SK-N-SH (cell line): ENCODE measurements at regions of chr17 and their contacts with region 1.

Region 1: GRCh38 chr17:77088455-77089123 is 52.2 kb upstream of the SEC14L1 start:
- DNase-seq: peak; percentile 93
- H3K4me3 ChIP-seq: peak overlapping the region; percentile 69 to 85
- H3K27ac ChIP-seq: peak overlapping the region; percentile 85 to 87
- H3K4me1 ChIP-seq: peaks cover 5 to 25% of the 10 kb centered on the region in 2 experiments; a peak in 1 of 4 replicates
- H3K27me3 ChIP-seq: no peaks in the 10 kb centered on the region
- CTCF ChIP-seq: peak; percentile 79
- EP300 ChIP-seq: peak in 1 of 2 experiments; percentile 16; a peak in 1 of 4 replicates
- RAD21 ChIP-seq: peak; percentile 48

Region 2: GRCh38 chr17:77076124-77076872 is 12.3 kb before region 1 on chr17:
- CTCF ChIA-PET with region 1: interaction called, 16 read pairs
- POLR2A ChIA-PET with region 1: interaction called, 9 read pairs
- DNase-seq: no peak
- H3K4me3 ChIP-seq: no peak overlapping the region
- H3K27ac ChIP-seq: no peak overlapping the region
- H3K4me1 ChIP-seq: no peaks in the 10 kb centered on the region; a peak in 1 of 4 replicates
- H3K27me3 ChIP-seq: peaks cover 29% of the 10 kb centered on the region
- CTCF ChIP-seq: no peak
- EP300 ChIP-seq: no peak
- RAD21 ChIP-seq: no peak

Region 3: DNA sequence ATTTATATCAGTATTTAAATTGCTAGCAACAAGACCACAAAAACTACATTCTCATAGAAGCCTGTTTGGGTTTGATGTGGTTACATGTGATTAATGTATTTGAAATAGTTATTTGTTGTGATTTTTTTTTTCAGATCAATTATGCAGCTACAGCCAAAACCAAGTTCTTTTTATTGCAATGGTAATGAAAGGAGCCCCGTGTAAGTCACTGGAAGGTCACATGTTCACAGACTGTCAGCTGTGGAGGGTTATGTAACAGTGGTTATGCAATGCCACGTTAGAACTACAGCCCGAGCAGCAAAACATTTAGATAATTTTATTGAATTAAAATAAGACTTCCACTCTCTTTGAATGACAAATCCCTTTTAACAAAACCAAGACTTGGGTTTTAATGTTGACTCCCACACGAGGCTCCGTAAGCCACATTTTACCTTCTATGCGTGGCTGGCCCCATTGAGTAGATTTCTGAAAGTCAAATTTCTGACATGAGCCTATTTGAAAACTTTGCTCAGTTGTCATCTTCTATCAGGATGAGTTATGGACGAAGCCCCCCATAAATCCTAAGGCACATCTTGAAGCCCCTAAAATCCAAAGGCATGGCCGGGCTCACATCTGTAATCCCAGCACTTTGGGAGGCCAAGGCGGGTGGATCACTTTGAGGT is 10.4 kb after region 1 on chr17:
- CTCF ChIA-PET with region 1: interaction called, 19 read pairs
- POLR2A ChIA-PET with region 1: interaction called, 5 read pairs
- DNase-seq: no peak
- H3K4me3 ChIP-seq: no peak overlapping the region
- H3K27ac ChIP-seq: no peak overlapping the region
- H3K4me1 ChIP-seq: no peaks in the 10 kb centered on the region
- H3K27me3 ChIP-seq: no peaks in the 10 kb centered on the region
- CTCF ChIP-seq: no peak
- EP300 ChIP-seq: no peak
- RAD21 ChIP-seq: no peak

Region 4: GRCh38 chr17:77235370-77235941 is 146.9 kb after region 1 on chr17:
- CTCF ChIA-PET with region 1: interaction called, 14 read pairs
- POLR2A ChIA-PET with region 1: interaction called, 4 read pairs
- DNase-seq: peak; percentile 71
- H3K4me3 ChIP-seq: peak overlapping the region; percentile 7 to 42; a peak in 3 of 4 replicates
- H3K27ac ChIP-seq: peak overlapping the region; percentile 45 to 81
- H3K4me1 ChIP-seq: peaks cover 3 to 15% of the 10 kb centered on the region in 2 experiments; a peak in 2 of 4 replicates
- H3K27me3 ChIP-seq: no peaks in the 10 kb centered on the region
- CTCF ChIP-seq: no peak
- EP300 ChIP-seq: peak in 1 of 2 experiments; percentile 76; a peak in 2 of 4 replicates
- RAD21 ChIP-seq: no peak

Region 5: GRCh38 chr17:77254951-77255825 is 166.6 kb after region 1 on chr17:
- CTCF ChIA-PET with region 1: interaction called, 99 read pairs
- POLR2A ChIA-PET with region 1: interaction called, 3 read pairs
- DNase-seq: peak; percentile 68
- H3K4me3 ChIP-seq: no peak overlapping the region
- H3K27ac ChIP-seq: peak overlapping the region; percentile 53 to 76; a peak in 3 of 4 replicates
- H3K4me1 ChIP-seq: peaks cover 11 to 23% of the 10 kb centered on the region in 2 experiments; a peak in 3 of 4 replicates
- H3K27me3 ChIP-seq: no peaks in the 10 kb centered on the region
- CTCF ChIP-seq: no peak
- EP300 ChIP-seq: peak in 1 of 2 experiments; percentile 97; a peak in 2 of 4 replicates
- RAD21 ChIP-seq: no peak

Region 6: DNA sequence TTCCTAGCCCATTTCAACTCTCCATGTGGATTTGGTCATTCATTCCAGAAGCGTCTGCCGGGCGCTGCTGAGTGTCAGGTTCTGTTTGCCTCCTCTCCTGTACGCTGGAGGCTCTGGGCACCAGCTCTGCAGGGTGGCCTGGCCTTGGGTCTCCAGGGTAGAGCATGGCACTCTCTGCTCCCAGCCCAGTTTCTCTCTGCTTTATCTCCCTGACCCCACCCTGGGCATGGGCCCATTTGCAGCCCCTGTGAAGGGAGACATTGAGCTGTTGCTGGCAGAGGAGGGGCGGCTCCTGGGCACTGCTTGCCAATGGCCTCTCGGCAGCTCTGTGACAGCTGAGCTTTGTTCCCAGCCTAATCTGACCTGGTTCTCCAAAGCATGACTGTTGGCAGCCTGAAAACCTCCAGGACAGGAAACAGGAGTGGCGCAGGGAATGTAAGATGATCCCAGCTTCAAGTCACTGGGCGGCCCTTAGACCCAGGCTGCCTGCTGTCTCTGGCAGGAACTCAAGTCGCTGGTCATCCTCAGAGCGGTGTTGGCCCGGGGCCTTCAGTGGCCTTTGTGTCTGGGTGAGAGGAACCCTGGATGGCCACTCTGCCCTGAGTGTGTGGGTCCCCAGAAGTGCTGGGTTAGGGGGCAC is 199.0 kb after region 1 on chr17:
- CTCF ChIA-PET with region 1: interaction called, 10 read pairs
- POLR2A ChIA-PET with region 1: interaction called, 3 read pairs
- DNase-seq: peak; percentile 80
- H3K4me3 ChIP-seq: peak overlapping the region; percentile 35; a peak in 3 of 4 replicates
- H3K27ac ChIP-seq: peak overlapping the region; percentile 95 to 98
- H3K4me1 ChIP-seq: peaks cover 46 to 64% of the 10 kb centered on the region in 2 experiments
- H3K27me3 ChIP-seq: no peaks in the 10 kb centered on the region
- CTCF ChIP-seq: no peak
- EP300 ChIP-seq: peak in 1 of 2 experiments; percentile 80; a peak in 2 of 4 replicates
- RAD21 ChIP-seq: peak; percentile 10; the same call in 1 of the 2 replicates